ENCODE measurements at regions of chr16 and their contacts with region 1.

Region 1: GRCh38 chr16:27203429-27204231 is at the start of gene KDM8:
- DNase-seq: peak; percentile 96 to 99 (median 98)
- H3K4me3 ChIP-seq: peak within 1 kb of the TSS; percentile 68 to 100 (median 93)
- H3K27ac ChIP-seq: peak within 1 kb of the TSS; percentile 92 to 100 (median 99)
- H3K27me3 ChIP-seq: no peaks in the 10 kb centered on the region
- CTCF ChIP-seq: peak in 14 of 56 donors; percentile 1 to 40 (median 16)
- total RNA-seq, gene KDM8: 8.7 to 25.5 (median 15.1) TPM

Region 2: DNA sequence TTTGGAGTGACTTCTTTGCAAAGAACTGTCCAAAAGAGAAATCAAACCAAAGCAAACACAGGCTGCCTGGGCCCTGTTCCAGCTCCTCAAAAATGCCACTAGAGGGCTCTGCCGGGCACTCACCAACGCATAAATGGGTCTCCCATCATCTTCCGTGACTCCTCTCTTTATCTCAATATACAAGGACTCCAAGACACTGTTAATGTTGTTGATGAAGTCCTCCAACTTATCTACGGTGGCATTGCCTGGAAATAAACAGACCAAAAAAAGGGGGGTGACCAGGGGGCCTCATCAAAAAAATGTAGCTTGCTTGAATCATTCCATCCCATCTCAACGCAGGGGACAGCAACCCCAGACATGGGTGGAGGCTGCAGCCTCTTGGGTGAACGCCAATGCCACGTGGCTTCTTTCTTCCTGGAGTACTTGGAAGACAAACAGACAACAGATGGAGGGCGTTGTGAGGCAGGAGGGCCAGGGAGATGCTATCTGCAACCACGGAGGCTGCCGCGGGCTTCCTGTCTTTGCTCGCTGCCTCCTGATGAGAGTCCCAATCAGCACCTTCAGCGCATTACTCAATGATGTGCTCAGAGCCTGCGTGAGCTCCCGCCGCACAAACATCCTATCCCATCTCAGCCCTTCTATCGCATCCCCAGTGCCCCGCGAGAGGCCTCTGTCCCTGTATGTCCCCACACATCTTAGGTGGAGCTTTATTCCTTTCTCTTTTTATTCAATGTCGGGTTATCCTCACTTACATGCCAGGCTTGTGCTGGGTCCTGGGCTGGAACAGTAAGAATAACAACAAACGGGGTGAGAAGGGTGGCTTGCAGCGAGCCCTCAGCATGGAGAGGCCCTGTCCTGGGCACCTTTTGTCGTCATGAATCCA is 31.7 kb after region 1 on chr16:
- intact Hi-C with region 1: loop called in 1 of 2 experiments (anchors 5 kb)
- DNase-seq: peak; percentile 57 to 91 (median 74)
- H3K4me3 ChIP-seq: peak overlapping the region in 54 of 59 donors; percentile 4 to 61 (median 32)
- H3K27ac ChIP-seq: peak overlapping the region in 53 of 59 donors; percentile 9 to 80 (median 68)
- H3K27me3 ChIP-seq: no peaks in the 10 kb centered on the region
- CTCF ChIP-seq: peak; percentile 61 to 90 (median 80)

Region 3: GRCh38 chr16:27268376-27269299 is 65.0 kb after region 1 on chr16 and contains the start of gene NSMCE1:
- intact Hi-C with region 1: loop called (anchors 1 to 5 kb)
- DNase-seq: peak; percentile 96 to 98 (median 98)
- H3K4me3 ChIP-seq: peak within 1 kb of the TSS; percentile 55 to 99 (median 89)
- H3K27ac ChIP-seq: peak within 1 kb of the TSS in 56 of 59 donors; percentile 32 to 93 (median 80)
- H3K27me3 ChIP-seq: no peaks in the 10 kb centered on the region
- CTCF ChIP-seq: peak in 38 of 56 donors; percentile 3 to 49 (median 34)
- total RNA-seq, gene NSMCE1: 22.8 to 53.0 (median 35.7) TPM

Region 4: DNA sequence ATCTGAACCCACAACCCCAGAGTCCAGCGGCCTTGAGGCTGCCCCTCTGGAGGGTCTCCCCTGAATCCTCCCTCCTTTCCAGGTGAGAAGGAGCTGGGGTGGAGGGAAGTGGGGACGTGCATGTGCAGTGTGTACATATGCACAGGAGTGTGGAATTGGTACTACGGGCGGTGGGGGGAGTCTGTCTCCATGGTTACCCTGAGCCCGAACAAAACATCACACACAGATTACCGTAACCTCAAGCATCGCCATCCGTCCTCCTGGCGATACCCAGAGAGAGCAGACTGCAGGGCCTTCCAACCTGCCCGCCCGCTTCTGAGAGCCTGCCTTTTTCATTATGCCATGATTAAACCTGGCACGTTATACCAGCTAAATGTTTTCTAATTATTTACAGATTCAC is 834.8 kb after region 1 on chr16:
- intact Hi-C with region 1: no loop called
- DNase-seq: no peak
- H3K4me3 ChIP-seq: no peak overlapping the region
- H3K27ac ChIP-seq: no peak overlapping the region
- H3K27me3 ChIP-seq: no peaks in the 10 kb centered on the region
- CTCF ChIP-seq: no peak

Region 5: GRCh38 chr16:28211712-28212534 is 1008.3 kb after region 1 on chr16 and contains the start of gene XPO6:
- intact Hi-C with region 1: loop called in 1 of 2 experiments (anchors 10 kb)
- DNase-seq: peak; percentile 92 to 97 (median 96)
- H3K4me3 ChIP-seq: peak within 1 kb of the TSS; percentile 44 to 95 (median 83)
- H3K27ac ChIP-seq: peak within 1 kb of the TSS; percentile 50 to 95 (median 87)
- H3K27me3 ChIP-seq: no peaks in the 10 kb centered on the region
- CTCF ChIP-seq: peak in 21 of 56 donors; percentile 8 to 51 (median 25)
- total RNA-seq, gene XPO6: 111 to 213 (median 156) TPM

Measured in dorsolateral prefrontal cortex (tissue), 120 donors.